ENCODE measurements at regions of chr15 and their contacts with region 1.

Region 1: GRCh38 chr15:73697033-73697467 is 12.9 kb downstream of the CD276 start:
- DNase-seq: no peak
- ATAC-seq: peak; percentile 43
- H3K4me3 ChIP-seq: no peak overlapping the region
- H3K27ac ChIP-seq: no peak overlapping the region
- H3K4me1 ChIP-seq: peaks cover 0 to 16% of the 10 kb centered on the region in 2 experiments; a peak in 2 of 4 replicates
- H3K27me3 ChIP-seq: no peaks in the 10 kb centered on the region
- CTCF ChIP-seq: no peak
- POLR2A ChIP-seq: no peak
- RAD21 ChIP-seq: no peak

Region 2: GRCh38 chr15:73284090-73284716 is 412.8 kb before region 1 on chr15:
- CTCF ChIA-PET with region 1: interaction called, 3 read pairs
- POLR2A ChIA-PET with region 1: no interaction called
- RAD21 ChIA-PET with region 1: no interaction called
- intact Hi-C with region 1: loop called (anchors 1 kb)
- DNase-seq: no peak
- ATAC-seq: 0 out of 2 replicates have a peak, but pooled peaks have one; percentile 36
- H3K4me3 ChIP-seq: no peak overlapping the region
- H3K27ac ChIP-seq: no peak overlapping the region
- H3K4me1 ChIP-seq: no peaks in the 10 kb centered on the region
- H3K27me3 ChIP-seq: no peaks in the 10 kb centered on the region
- CTCF ChIP-seq: peak; percentile 14 to 47 (median 30); a peak in 4 of 6 replicates
- POLR2A ChIP-seq: no peak
- RAD21 ChIP-seq: peak; percentile 55

Region 3: GRCh38 chr15:73305331-73306211 is 391.5 kb before region 1 on chr15:
- CTCF ChIA-PET with region 1: no interaction called
- POLR2A ChIA-PET with region 1: no interaction called
- RAD21 ChIA-PET with region 1: no interaction called
- intact Hi-C with region 1: loop called (anchors 1 kb)
- DNase-seq: peak; percentile 61
- ATAC-seq: peak; percentile 98
- H3K4me3 ChIP-seq: no peak overlapping the region
- H3K27ac ChIP-seq: no peak overlapping the region
- H3K4me1 ChIP-seq: no peaks in the 10 kb centered on the region
- H3K27me3 ChIP-seq: no peaks in the 10 kb centered on the region
- CTCF ChIP-seq: peak; percentile 80 to 85 (median 81)
- POLR2A ChIP-seq: no peak
- RAD21 ChIP-seq: peak; percentile 85

Region 4: DNA sequence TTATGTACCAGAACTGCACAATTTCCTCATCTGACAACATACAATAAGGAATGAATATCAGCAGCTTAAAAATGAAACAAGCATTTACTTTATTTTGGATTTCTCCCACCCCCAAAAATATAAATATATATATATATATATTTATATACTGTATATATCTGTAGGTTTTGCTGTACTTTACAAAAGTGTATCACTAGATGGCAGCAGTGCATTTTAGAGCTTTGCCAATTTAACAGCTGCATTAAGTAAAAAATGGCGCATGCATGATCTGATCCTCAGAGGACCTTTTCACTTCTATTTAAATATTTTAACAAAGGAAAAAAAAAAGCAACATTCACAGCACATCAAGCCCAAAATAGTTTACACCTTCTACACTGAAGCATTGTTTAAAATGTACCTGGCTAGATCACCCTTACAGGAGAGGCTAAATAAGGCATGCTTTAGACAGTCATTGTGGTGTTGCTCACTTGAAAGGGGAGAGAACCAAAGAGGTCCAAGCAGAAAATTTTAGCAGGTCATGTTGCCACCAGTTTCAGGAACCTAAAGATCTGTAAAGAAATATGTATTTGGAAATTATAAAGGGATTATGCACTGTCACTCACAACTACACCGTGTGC is 136.4 kb before region 1 on chr15:
- CTCF ChIA-PET with region 1: interaction called, 33 read pairs
- POLR2A ChIA-PET with region 1: no interaction called
- RAD21 ChIA-PET with region 1: interaction called, 4 to 5 read pairs
- intact Hi-C with region 1: loop called (anchors 1 kb)
- DNase-seq: peak; percentile 46
- ATAC-seq: peak; percentile 51; the same call in 1 of the 2 replicates
- H3K4me3 ChIP-seq: no peak overlapping the region
- H3K27ac ChIP-seq: no peak overlapping the region
- H3K4me1 ChIP-seq: peaks cover 10 to 13% of the 10 kb centered on the region in 2 experiments
- H3K27me3 ChIP-seq: no peaks in the 10 kb centered on the region
- CTCF ChIP-seq: peak; percentile 36 to 59 (median 43); a peak in 4 of 6 replicates
- POLR2A ChIP-seq: no peak
- RAD21 ChIP-seq: peak; percentile 64

Region 5: DNA sequence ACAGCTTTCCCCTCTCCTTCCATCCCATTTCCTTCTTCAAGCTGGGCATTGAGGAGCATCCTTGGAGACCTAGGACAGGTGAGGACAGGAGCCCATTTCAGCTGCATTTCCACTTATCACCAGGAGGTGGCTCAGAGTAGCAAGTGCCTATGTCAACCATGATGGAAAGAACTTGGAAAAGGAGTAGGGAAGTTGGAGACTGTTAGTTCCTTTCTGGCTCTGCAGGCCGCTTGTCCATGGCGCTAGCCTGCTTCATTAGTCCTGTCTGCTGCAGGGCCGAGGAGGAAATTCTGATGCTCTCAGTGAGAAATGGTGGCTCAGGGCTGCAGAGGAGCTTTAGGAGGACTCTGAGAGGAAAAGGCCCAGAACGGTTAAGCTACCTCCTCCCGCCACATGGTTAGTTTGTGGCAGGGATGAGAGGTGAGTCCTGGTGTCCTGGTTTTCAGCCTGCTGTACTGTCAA is 19.9 kb before region 1 on chr15:
- CTCF ChIA-PET with region 1: interaction called, 37 read pairs
- POLR2A ChIA-PET with region 1: no interaction called
- RAD21 ChIA-PET with region 1: interaction called, 3 to 5 read pairs
- intact Hi-C with region 1: loop called (anchors 1 kb)
- DNase-seq: peak; percentile 51
- ATAC-seq: peak; percentile 89
- H3K4me3 ChIP-seq: no peak overlapping the region
- H3K27ac ChIP-seq: no peak overlapping the region
- H3K4me1 ChIP-seq: peaks cover 0 to 5% of the 10 kb centered on the region in 2 experiments; a peak in 1 of 4 replicates
- H3K27me3 ChIP-seq: no peaks in the 10 kb centered on the region
- CTCF ChIP-seq: peak; percentile 80 to 84 (median 81)
- POLR2A ChIP-seq: no peak
- RAD21 ChIP-seq: peak; percentile 69

Region 6: DNA sequence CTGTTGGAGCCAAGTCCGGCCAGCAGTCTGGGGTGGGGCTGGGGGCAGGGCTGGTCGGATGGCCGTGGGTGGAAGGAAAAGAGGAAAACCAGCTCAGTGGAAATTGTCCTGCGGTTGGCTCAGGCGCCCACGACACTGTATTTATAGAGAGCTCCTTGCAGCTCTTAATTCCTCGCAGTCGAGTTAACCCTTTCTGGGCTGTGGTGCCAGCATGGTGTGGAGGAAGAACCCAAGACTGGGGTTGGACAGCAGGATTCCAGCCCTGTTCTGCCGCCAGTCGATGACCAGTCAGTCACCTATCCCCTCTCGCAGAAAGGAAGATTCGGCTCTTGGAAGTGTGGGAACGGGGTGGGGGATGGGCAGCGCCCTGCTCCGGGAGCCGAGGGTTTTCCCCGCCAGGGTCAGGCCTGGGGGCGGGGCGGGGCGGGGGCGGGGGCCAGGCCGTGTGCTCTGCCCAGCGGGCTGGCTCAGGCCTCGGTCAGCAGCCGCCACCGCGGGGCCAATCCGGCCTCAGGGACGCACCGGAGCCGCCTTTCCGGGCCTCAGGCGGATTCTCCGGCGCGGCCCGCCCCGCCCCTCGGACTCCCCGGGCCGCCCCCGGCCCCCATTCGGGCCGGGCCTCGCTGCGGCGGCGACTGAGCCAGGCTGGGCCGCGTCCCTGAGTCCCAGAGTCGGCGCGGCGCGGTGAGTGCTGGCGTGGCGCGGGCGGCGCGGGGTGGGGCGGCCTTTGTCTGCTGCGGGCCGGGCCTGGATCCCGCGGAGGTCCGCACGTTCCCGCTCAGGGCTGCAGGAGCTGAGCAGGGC is 13.1 kb before region 1 on chr15 and contains the start of gene CD276:
- CTCF ChIA-PET with region 1: interaction called, 37 read pairs
- POLR2A ChIA-PET with region 1: no interaction called
- RAD21 ChIA-PET with region 1: no interaction called
- intact Hi-C with region 1: no loop called
- DNase-seq: peak; percentile 45
- ATAC-seq: peak; percentile 85
- H3K4me3 ChIP-seq: peak within 1 kb of the TSS; percentile 84 to 87
- H3K27ac ChIP-seq: peak within 1 kb of the TSS; percentile 80
- H3K4me1 ChIP-seq: peaks cover 21 to 56% of the 10 kb centered on the region in 2 experiments
- H3K27me3 ChIP-seq: no peaks in the 10 kb centered on the region
- CTCF ChIP-seq: peak in 1 of 3 experiments; percentile 46; a peak in 2 of 6 replicates
- POLR2A ChIP-seq: no peak
- RAD21 ChIP-seq: peak; percentile 46; the same call in 1 of the 2 replicates
- total RNA-seq, gene CD276: 75.4 TPM